B cell (primary cell): ENCODE measurements at regions of chr16 and their contacts with region 1.

Region 1: GRCh38 chr16:3023669-3024478 is at the starts of genes HCFC1R1 and THOC6:
- DNase-seq: peak; percentile 99
- ATAC-seq: peak; percentile 76
- H3K4me3 ChIP-seq: peak within 1 kb of the TSS; percentile 43 to 79 (median 71)
- H3K4me3 Mint-ChIP-seq: peak within 1 kb of the TSS; percentile 97
- H3K27ac ChIP-seq: peak within 1 kb of the TSS; percentile 83 to 94
- H3K27ac Mint-ChIP-seq: peak within 1 kb of the TSS; percentile 99
- H3K4me1 ChIP-seq: peaks cover 44 to 60% of the 10 kb centered on the region in 2 donors
- H3K4me1 Mint-ChIP-seq: peaks cover 47% of the 10 kb centered on the region
- H3K27me3 ChIP-seq: peaks cover 0 to 5% (median 2%) of the 10 kb centered on the region in 4 experiments
- H3K27me3 Mint-ChIP-seq: peaks cover 1% of the 10 kb centered on the region
- CTCF ChIP-seq: no peak
- total RNA-seq, gene HCFC1R1: 17.9 and 19.1 TPM in 2 replicates
- total RNA-seq, gene THOC6: 25.3 and 28.5 TPM in 2 replicates

Region 2: GRCh38 chr16:1308977-1309885 is 1714.6 kb before region 1 on chr16 and contains the start of gene UBE2I:
- CTCF ChIA-PET with region 1: no interaction called
- POLR2A ChIA-PET with region 1: no interaction called
- intact Hi-C with region 1: loop called (anchors 10 kb)
- DNase-seq: peak; percentile 100
- ATAC-seq: peak; percentile 74
- H3K4me3 ChIP-seq: peak within 1 kb of the TSS; percentile 80 to 90 (median 86)
- H3K4me3 Mint-ChIP-seq: peak within 1 kb of the TSS; percentile 99
- H3K27ac ChIP-seq: peak within 1 kb of the TSS; percentile 99 to 100
- H3K27ac Mint-ChIP-seq: peak within 1 kb of the TSS; percentile 100
- H3K4me1 ChIP-seq: peaks cover 41 to 65% of the 10 kb centered on the region in 2 donors
- H3K4me1 Mint-ChIP-seq: peaks cover 52% of the 10 kb centered on the region
- H3K27me3 ChIP-seq: no peaks in the 10 kb centered on the region
- H3K27me3 Mint-ChIP-seq: no peaks in the 10 kb centered on the region
- CTCF ChIP-seq: no peak
- total RNA-seq, gene UBE2I: 253 and 265 TPM in 2 replicates

Region 3: GRCh38 chr16:1713933-1714332 is 1309.9 kb before region 1 on chr16:
- CTCF ChIA-PET with region 1: no interaction called
- POLR2A ChIA-PET with region 1: no interaction called
- intact Hi-C with region 1: no loop called
- DNase-seq: peak; percentile 93
- ATAC-seq: peak; percentile 91
- H3K4me3 ChIP-seq: peak overlapping the region in 4 of 5 experiments; percentile 7 to 40 (median 26)
- H3K4me3 Mint-ChIP-seq: peak overlapping the region; percentile 85
- H3K27ac ChIP-seq: peak overlapping the region; percentile 90 to 98
- H3K27ac Mint-ChIP-seq: peak overlapping the region; percentile 98
- H3K4me1 ChIP-seq: peaks cover 65 to 80% of the 10 kb centered on the region in 2 donors
- H3K4me1 Mint-ChIP-seq: peaks cover 57% of the 10 kb centered on the region
- H3K27me3 ChIP-seq: no peaks in the 10 kb centered on the region
- H3K27me3 Mint-ChIP-seq: no peaks in the 10 kb centered on the region
- CTCF ChIP-seq: no peak

Region 4: GRCh38 chr16:2968738-2969544 is 54.9 kb before region 1 on chr16 and contains the start of gene PAQR4:
- CTCF ChIA-PET with region 1: interaction called, 4 read pairs
- POLR2A ChIA-PET with region 1: interaction called, 7 read pairs
- intact Hi-C with region 1: loop called (anchors 5 kb)
- DNase-seq: peak; percentile 92
- ATAC-seq: peak; percentile 81
- H3K4me3 ChIP-seq: peak within 1 kb of the TSS; percentile 31 to 64 (median 58)
- H3K4me3 Mint-ChIP-seq: peak within 1 kb of the TSS; percentile 87
- H3K27ac ChIP-seq: no peak within 1 kb of the TSS
- H3K27ac Mint-ChIP-seq: peak within 1 kb of the TSS; percentile 73
- H3K4me1 ChIP-seq: peaks cover 53 to 56% of the 10 kb centered on the region in 2 donors
- H3K4me1 Mint-ChIP-seq: peaks cover 24% of the 10 kb centered on the region
- H3K27me3 ChIP-seq: peaks cover 0 to 51% (median 14%) of the 10 kb centered on the region in 4 experiments
- H3K27me3 Mint-ChIP-seq: peaks cover 16% of the 10 kb centered on the region
- CTCF ChIP-seq: no peak
- total RNA-seq, gene PAQR4: 1.8 and 2.6 TPM in 2 replicates

Region 5: GRCh38 chr16:3035302-3036234 is 11.7 kb after region 1 on chr16:
- CTCF ChIA-PET with region 1: interaction called, 28 read pairs
- POLR2A ChIA-PET with region 1: interaction called, 3 read pairs
- intact Hi-C with region 1: no loop called
- DNase-seq: no peak
- ATAC-seq: no peak
- H3K4me3 ChIP-seq: peak overlapping the region in 3 of 5 experiments; percentile 1 to 19 (median 15)
- H3K4me3 Mint-ChIP-seq: peak overlapping the region; percentile 49
- H3K27ac ChIP-seq: no peak overlapping the region
- H3K27ac Mint-ChIP-seq: peak overlapping the region; percentile 70
- H3K4me1 ChIP-seq: peaks cover 15 to 33% of the 10 kb centered on the region in 2 donors
- H3K4me1 Mint-ChIP-seq: peaks cover 14% of the 10 kb centered on the region
- H3K27me3 ChIP-seq: peaks cover 0 to 90% (median 48%) of the 10 kb centered on the region in 4 experiments
- H3K27me3 Mint-ChIP-seq: peaks cover 58% of the 10 kb centered on the region
- CTCF ChIP-seq: no peak

Region 6: DNA sequence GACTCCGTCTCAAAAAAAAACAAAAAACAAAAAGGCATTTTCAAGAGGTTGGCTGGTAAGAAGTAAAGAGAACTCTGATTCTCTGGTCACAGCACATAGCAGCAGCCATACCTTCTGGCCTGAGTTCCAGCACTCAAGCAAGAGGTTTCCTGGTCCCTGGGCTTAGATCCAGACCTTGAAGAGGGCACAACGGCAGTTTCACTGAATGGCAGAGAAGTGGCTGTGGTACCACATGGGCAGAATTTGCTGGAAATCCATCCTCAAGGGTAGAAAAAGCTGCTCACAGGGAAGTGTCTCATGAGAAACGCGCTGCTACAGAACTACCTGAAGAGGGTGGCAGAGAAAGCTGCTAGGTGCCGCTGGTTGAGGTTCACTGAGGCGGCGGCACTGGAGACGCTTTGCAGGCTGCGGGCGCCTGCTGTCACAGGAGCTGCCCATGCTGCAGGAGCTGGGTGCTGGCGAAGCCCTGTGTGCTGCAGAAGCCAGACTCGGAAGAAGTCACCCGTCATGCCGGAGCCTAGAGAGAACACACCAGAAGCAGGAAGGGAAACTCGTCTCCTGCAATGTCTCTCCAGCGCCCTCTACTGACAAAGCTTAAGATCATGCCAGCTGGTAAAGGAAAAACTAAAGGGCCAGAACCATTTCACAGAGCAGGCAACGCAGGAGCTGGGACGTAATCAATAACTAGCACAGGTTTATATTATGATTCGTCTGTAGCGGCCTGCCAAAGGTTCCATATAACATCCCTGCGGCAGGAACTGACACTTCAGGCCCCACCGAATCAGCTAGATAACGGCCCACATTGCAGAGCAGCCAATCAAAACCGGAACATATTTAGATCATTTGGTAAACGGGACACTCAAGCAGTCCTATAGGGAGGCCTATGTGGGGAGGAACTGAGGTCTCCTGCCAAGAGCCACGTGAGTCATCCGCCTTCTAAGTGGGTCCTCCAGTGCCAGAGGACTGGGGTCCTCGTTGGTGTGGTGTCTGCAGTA is 105.6 kb after region 1 on chr16:
- CTCF ChIA-PET with region 1: interaction called, 133 read pairs
- POLR2A ChIA-PET with region 1: interaction called, 3 read pairs
- intact Hi-C with region 1: no loop called
- DNase-seq: peak; percentile 92
- ATAC-seq: peak; percentile 73
- H3K4me3 ChIP-seq: peak overlapping the region; percentile 45 to 85 (median 67)
- H3K4me3 Mint-ChIP-seq: peak overlapping the region; percentile 92
- H3K27ac ChIP-seq: peak overlapping the region; percentile 5 to 56
- H3K27ac Mint-ChIP-seq: peak overlapping the region; percentile 87
- H3K4me1 ChIP-seq: peaks cover 24 to 37% of the 10 kb centered on the region in 2 donors
- H3K4me1 Mint-ChIP-seq: peaks cover 44% of the 10 kb centered on the region
- H3K27me3 ChIP-seq: no peaks in the 10 kb centered on the region
- H3K27me3 Mint-ChIP-seq: no peaks in the 10 kb centered on the region
- CTCF ChIP-seq: peak; percentile 80

Region 7: DNA sequence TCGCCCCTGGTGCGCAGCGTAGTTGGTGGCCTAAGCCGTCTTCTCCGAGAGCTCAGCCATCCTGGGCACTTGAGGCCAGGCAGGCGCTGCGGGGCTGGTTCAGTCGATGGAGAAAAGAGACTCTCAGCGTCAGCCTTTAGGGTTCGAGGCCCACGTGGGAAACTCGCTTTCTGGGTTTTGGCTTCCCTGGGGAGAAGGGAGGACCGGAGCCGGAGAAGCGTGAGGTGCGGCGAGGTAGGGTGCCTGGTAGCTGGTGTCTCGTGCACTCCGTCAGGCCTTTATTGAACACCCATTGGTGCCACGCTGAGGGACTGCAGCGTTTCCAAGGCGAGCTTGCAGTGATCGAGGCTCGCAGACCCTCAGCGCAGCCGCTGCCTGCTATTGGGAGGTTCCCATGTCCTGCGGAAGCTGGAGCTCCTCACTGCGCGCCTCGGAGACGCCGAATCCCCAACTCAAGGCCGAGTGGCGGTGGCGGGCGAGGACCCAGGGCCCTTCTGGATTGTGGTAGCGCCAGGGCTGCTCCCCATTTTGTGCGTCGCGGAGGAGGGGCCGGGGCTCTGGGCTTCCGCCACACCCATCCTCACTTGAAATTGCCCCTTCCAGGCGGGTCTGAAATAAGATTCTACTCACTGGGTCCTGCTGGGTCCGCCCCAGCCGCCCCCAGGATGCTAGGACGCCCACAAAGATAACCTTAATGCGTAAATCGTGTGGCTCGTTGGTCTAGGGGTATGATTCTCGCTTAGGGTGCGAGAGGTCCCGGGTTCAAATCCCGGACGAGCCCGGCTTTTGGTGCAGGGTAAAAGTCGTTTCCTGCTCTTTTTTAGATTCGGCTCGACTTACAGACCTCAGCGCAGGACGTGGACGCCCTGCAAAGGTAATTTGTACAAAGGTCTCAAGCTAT is 165.3 kb after region 1 on chr16:
- CTCF ChIA-PET with region 1: no interaction called
- POLR2A ChIA-PET with region 1: no interaction called
- intact Hi-C with region 1: no loop called
- DNase-seq: peak; percentile 58
- ATAC-seq: no peak
- H3K4me3 ChIP-seq: peak overlapping the region in 2 of 5 experiments; percentile 1 to 11
- H3K4me3 Mint-ChIP-seq: peak overlapping the region; percentile 73
- H3K27ac ChIP-seq: no peak overlapping the region
- H3K27ac Mint-ChIP-seq: peak overlapping the region; percentile 46
- H3K4me1 ChIP-seq: peaks cover 27 to 29% of the 10 kb centered on the region in 2 donors
- H3K4me1 Mint-ChIP-seq: peaks cover 36% of the 10 kb centered on the region
- H3K27me3 ChIP-seq: peaks cover 0 to 95% (median 74%) of the 10 kb centered on the region in 4 experiments
- H3K27me3 Mint-ChIP-seq: peaks cover 67% of the 10 kb centered on the region
- CTCF ChIP-seq: no peak

Region 8: DNA sequence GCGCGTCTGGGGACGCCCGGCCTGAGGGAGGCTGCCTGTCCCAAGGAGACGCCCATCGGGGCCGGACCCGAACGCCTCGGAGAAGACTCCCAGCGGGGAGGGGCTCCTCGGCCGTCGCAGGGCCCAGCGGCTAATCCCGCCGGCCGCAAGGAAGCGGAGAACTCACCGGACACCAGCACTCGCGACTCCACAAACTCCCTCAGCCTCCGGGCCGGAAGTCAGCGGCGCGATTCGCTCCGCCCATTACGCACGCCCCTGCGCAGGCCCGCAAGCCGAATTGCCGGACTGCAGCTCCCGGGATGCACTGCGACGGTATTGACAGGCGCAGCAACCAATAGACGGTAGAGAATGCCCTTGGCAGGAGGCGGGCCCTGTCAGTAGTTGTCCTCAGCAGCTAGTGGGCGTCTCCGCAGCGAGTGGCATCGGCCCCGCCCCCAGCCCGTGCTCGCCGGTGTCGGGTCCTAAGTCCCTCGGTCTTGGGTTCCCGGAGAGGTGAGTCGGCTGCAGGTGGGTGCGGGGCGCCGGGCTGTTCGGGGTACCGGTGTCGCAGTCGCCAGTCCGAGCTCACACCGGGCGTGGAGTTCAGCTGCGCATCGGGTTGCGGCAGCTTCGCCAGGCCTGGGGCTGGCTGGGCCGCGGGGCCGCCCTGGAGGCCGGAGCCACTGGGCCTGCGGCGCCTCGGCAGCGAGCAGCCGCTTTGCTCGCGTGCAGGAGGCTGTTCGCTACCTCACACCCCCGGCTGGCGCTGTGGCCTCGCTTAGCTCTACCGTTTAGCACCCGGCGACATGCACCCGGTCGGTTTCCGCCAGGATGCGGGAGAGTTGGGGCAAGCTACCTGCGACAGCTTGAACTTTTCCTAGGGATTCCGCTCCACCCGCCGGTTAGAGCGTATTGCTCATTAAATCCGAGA is 377.2 kb after region 1 on chr16 and contains the starts of genes ZNF174 and ZSCAN32:
- CTCF ChIA-PET with region 1: no interaction called
- POLR2A ChIA-PET with region 1: no interaction called
- intact Hi-C with region 1: loop called (anchors 5 kb)
- DNase-seq: peak; percentile 99
- ATAC-seq: peak; percentile 97
- H3K4me3 ChIP-seq: peak within 1 kb of the TSS; percentile 59 to 84 (median 76)
- H3K4me3 Mint-ChIP-seq: peak within 1 kb of the TSS; percentile 98
- H3K27ac ChIP-seq: peak within 1 kb of the TSS; percentile 13 to 80
- H3K27ac Mint-ChIP-seq: peak within 1 kb of the TSS; percentile 97
- H3K4me1 ChIP-seq: peaks cover 11 to 23% of the 10 kb centered on the region in 2 donors
- H3K4me1 Mint-ChIP-seq: peaks cover 50% of the 10 kb centered on the region
- H3K27me3 ChIP-seq: no peaks in the 10 kb centered on the region
- H3K27me3 Mint-ChIP-seq: no peaks in the 10 kb centered on the region
- CTCF ChIP-seq: no peak
- total RNA-seq, gene ZNF174: 12.7 and 13.3 TPM in 2 replicates
- total RNA-seq, gene ZSCAN32: 25.9 and 26.9 TPM in 2 replicates